ENCODE measurements at regions of chr6 and their contacts with region 1.

Region 1: DNA sequence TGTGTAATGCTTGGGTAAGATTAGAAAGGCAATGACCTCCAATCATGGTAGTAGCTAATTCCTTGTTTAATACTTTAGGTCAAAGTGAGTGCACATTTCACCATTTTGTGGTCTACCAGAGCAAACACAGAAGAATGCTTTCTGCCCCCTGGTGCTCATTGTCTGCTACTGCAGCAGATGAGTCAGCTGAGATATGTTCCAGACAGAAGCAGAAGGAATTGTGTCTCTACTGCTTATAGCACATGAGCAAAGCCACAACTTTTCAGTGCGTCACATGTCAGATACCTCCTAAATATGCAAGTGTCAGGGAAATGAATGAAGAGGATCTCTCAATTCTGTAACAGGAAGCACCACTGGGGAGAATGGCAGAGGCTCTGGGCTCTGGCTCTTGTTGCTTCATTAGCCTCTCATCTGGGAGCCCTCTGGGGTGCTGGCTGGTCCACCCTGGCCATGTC is 308.9 kb downstream of the ALDH8A1 start:
- DNase-seq: peak; percentile 93
- H3K4me3 Mint-ChIP-seq: no peak overlapping the region
- H3K27ac Mint-ChIP-seq: no peak overlapping the region
- H3K4me1 Mint-ChIP-seq: peaks cover 26% of the 10 kb centered on the region
- H3K27me3 Mint-ChIP-seq: peaks cover 9% of the 10 kb centered on the region

Region 2: DNA sequence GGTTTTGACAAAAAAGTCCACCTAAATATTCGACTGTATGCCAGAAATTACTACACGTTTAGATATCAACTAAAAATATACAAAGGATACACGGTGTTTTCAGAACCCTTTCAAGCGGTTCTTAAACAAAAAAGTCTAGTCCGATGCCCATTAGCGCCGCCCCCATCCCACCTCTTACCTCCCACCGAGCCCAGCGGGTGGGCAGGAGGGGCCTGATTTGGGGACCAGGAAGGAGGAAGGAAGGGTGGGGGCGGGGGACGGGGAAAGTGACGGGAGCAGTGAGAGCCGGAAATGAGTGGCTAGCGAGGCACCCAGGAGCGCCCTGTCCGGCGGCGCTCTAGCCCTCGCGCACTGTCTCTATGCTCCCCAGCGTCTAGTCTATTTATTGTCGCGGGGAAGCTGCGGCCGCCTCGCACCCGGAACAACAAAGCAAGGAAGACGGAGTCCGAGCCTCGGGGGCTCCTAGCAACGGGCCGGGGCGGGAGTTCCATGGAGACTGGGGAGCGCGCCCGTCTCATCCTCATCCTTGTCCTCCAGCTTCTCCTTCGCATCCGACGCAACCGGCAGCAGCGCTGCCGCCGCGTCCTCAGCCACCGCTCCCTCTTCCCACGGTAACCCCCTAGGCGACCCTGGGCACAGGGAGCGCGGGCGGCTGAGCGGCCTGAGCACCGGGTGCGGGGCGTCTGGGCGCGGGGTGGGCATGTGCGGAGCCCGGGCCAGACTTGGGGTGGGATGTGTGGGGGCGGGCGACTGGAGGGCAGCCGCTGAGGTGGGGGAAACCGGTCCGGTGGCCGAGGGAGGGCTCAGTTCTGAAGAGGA is 688.0 kb before region 1 on chr6 and contains the start of gene TBPL1:
- intact Hi-C with region 1: loop called (anchors 10 kb)
- DNase-seq: peak; percentile 95
- H3K4me3 Mint-ChIP-seq: peak within 1 kb of the TSS; percentile 98
- H3K27ac Mint-ChIP-seq: peak within 1 kb of the TSS; percentile 89
- H3K4me1 Mint-ChIP-seq: peaks cover 39% of the 10 kb centered on the region
- H3K27me3 Mint-ChIP-seq: peaks cover 10% of the 10 kb centered on the region
- total RNA-seq, gene TBPL1: 37.2 and 40.0 TPM in 2 replicates

Region 3: DNA sequence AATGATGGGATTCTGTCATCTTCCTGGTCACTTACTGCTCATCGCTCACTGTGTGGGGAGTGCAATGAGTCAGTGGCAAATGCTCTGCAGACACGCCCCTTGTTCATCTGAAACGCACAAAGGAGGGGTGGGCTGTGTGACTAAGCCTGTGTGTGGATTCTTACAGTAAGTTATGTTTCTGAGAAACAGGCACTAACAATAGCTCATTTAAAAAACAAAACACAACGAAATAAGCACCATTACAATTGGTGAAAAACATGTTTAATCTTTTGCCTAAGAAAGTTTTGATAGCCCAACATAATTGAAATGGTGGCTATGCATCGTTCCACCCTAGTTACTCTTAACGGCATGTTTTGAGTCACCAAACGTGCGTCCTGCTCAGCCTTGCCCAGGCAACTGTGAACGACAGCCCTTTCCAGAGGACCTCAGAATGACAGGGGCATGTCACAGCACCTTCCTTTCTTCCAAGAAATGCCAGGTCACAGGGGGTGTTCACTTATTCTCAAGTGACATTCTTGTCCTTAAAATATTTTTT is 204.7 kb before region 1 on chr6:
- intact Hi-C with region 1: loop called (anchors 2 kb)
- DNase-seq: peak; percentile 90
- H3K4me3 Mint-ChIP-seq: peak overlapping the region; percentile 73
- H3K27ac Mint-ChIP-seq: peak overlapping the region; percentile 94
- H3K4me1 Mint-ChIP-seq: peaks cover 37% of the 10 kb centered on the region
- H3K27me3 Mint-ChIP-seq: no peaks in the 10 kb centered on the region

Region 4: DNA sequence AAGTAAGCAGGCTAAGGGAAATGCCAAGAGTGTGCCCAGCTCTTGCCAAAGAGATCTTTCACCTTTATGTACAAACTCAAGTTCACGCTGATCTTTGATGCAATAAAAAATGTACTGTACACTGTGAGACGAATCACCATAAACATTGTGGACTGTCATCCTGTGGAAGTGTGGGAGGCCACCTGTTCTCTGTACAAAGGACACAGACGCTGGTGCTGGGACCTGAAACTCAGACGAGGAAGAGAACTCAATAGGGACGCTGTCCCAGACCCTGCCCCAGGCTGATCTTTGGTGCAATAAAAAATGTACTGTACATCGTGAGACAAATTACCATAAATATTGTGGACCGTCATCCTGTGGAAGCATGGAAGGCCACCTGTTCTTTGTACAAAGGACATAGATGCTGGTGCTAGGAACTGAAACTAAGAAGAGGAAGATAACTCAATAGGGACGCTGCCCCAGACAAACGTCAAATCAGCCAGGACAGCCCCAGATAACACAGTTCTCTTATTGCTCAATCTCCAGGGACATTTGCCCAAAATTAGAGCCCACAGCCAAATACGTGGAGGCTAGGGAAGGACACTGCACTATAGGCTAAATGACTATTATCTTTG is 10.4 kb before region 1 on chr6:
- intact Hi-C with region 1: no loop called
- DNase-seq: no peak
- H3K4me3 Mint-ChIP-seq: no peak overlapping the region
- H3K27ac Mint-ChIP-seq: no peak overlapping the region
- H3K4me1 Mint-ChIP-seq: peaks cover 15% of the 10 kb centered on the region
- H3K27me3 Mint-ChIP-seq: peaks cover 19% of the 10 kb centered on the region

Region 5: DNA sequence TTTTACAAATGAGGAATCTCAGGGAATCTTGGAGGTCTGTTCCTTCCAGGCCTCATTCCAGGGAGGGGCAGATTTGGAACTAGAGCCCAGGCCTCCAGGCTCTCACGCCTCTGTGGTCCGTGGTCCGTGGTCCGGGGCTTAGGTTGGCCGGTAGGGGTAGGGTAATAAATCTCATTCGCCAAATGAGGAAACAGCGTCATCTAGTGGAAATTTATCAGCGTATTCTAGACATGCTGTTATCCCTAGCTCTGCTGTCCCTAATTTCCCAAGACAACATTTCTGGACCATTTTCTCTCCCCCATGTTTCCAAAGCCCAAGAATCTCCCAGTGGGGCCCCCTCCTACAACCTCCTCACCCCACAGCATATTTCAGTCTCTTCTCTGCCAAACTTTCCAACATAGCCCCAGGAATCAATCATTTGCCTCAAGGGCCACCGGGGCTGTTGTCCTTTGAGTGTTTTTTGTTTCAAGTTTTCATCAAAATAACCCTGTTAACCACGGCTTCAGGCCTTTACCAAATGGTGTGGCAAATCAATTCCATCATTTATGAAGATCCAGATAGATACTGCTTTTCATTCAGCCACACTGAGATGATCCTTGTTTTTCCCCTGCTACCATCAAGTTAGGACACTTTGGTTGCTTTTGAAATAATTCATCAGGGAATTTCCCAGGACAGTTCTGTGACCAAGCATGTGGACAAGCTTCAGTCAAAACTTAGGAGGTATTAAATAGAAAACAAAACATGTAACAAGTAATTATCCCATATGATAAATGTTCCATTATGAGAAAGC is 182.1 kb after region 1 on chr6:
- intact Hi-C with region 1: loop called (anchors 2 kb)
- DNase-seq: peak; percentile 81
- H3K4me3 Mint-ChIP-seq: no peak overlapping the region
- H3K27ac Mint-ChIP-seq: peak overlapping the region; percentile 16
- H3K4me1 Mint-ChIP-seq: peaks cover 6% of the 10 kb centered on the region
- H3K27me3 Mint-ChIP-seq: peaks cover 3% of the 10 kb centered on the region

Region 6: GRCh38 chr6:134938896-134939295 is 297.9 kb after region 1 on chr6:
- intact Hi-C with region 1: loop called (anchors 5 kb)
- DNase-seq: peak; percentile 80
- H3K4me3 Mint-ChIP-seq: peak overlapping the region; percentile 15
- H3K27ac Mint-ChIP-seq: no peak overlapping the region
- H3K4me1 Mint-ChIP-seq: peaks cover 23% of the 10 kb centered on the region
- H3K27me3 Mint-ChIP-seq: no peaks in the 10 kb centered on the region